Psoas muscle (tissue), 8 donors: ENCODE measurements at regions of chr15 and their contacts with region 1.

Region 1: GRCh38 chr15:70097337-70098169 is at the start of gene TLE3:
- DNase-seq: peak; percentile 98 to 99
- ATAC-seq: peak; percentile 57 to 68 (median 62)
- H3K4me3 ChIP-seq: peak within 1 kb of the TSS; percentile 95
- H3K27ac ChIP-seq: peak within 1 kb of the TSS; percentile 97
- H3K4me1 ChIP-seq: peaks cover 60% of the 10 kb centered on the region
- H3K27me3 ChIP-seq: no peaks in the 10 kb centered on the region
- CTCF ChIP-seq: peak; percentile 42
- total RNA-seq, gene TLE3: 10.8 to 59.9 (median 18.6) TPM

Region 2: GRCh38 chr15:69794645-69795461 is 302.7 kb before region 1 on chr15:
- intact Hi-C with region 1: loop called in 1 of 2 experiments (anchors 10 kb)
- DNase-seq: peak in 1 of 2 donors; percentile 45
- ATAC-seq: no peak
- H3K4me3 ChIP-seq: no peak overlapping the region
- H3K27ac ChIP-seq: peak overlapping the region; percentile 71
- H3K4me1 ChIP-seq: peaks cover 29% of the 10 kb centered on the region
- H3K27me3 ChIP-seq: peaks cover 0 to 2% (median 0%) of the 10 kb centered on the region in 3 donors
- CTCF ChIP-seq: no peak

Region 3: DNA sequence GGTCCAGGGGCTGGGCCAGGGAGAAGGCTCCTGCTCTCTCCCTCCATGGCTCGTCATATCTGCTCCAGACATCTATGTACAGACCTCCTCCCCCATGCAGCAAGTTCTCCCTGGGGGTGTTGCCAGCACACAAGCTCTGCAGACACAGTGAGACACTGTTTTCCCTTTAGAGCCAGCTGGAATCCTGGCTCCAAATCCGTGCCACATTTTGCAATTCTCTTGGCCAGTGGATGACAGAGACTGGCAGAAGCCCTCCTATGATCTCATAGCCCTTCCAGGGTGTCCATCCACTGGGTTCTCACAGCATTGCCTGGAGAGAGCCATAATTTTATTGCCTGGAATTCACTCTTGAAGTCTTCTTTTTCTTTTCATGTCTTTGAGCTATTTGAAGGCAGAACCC is 203.7 kb before region 1 on chr15:
- intact Hi-C with region 1: loop called in 1 of 2 experiments (anchors 5 kb)
- DNase-seq: peak; percentile 67 to 80
- ATAC-seq: peak; percentile 89 to 98 (median 93)
- H3K4me3 ChIP-seq: no peak overlapping the region
- H3K27ac ChIP-seq: no peak overlapping the region
- H3K4me1 ChIP-seq: peaks cover 5% of the 10 kb centered on the region
- H3K27me3 ChIP-seq: peaks cover 0 to 8% (median 2%) of the 10 kb centered on the region in 3 donors
- CTCF ChIP-seq: no peak

Region 4: DNA sequence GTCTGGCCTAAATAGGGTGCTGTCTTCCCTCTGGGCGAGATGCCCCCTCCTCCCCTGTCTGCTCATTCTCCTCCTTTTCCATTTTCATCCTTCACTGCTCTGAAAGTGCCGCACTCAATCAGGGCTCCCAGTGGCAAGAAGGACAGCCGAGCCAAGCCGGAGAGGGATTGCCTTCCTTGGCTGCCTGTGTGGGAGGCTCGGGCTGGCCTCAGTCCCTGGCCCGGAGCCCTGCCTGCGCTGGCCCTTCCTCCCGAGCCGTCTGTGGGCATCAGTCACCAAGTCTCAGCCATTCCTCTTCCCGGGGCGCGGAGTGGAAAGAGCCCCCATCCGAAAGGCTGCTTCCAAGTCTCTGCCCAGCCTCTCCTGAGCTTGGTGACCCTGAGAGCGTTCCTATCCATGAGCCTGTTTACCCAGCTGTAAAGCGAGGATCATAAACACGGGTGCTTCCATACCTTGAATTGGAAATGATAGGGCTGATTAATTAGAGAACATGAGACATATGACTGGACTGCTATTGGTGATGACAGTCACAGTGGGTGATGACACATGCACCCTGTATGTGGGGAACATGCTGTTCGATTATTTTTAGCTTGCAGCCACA is 59.2 kb after region 1 on chr15:
- intact Hi-C with region 1: loop called (anchors 1 to 5 kb)
- DNase-seq: peak; percentile 79 to 89
- ATAC-seq: peak; percentile 82 to 88 (median 86)
- H3K4me3 ChIP-seq: peak overlapping the region; percentile 37
- H3K27ac ChIP-seq: peak overlapping the region; percentile 87
- H3K4me1 ChIP-seq: peaks cover 47% of the 10 kb centered on the region
- H3K27me3 ChIP-seq: no peaks in the 10 kb centered on the region
- CTCF ChIP-seq: no peak

Region 5: GRCh38 chr15:70362886-70363285 is 265.3 kb after region 1 on chr15:
- intact Hi-C with region 1: loop called in 1 of 2 experiments (anchors 10 kb)
- DNase-seq: peak in 1 of 2 donors; percentile 29
- ATAC-seq: peak; percentile 51 to 82 (median 69)
- H3K4me3 ChIP-seq: no peak overlapping the region
- H3K27ac ChIP-seq: no peak overlapping the region
- H3K4me1 ChIP-seq: no peaks in the 10 kb centered on the region
- H3K27me3 ChIP-seq: peaks cover 0 to 4% (median 2%) of the 10 kb centered on the region in 3 donors
- CTCF ChIP-seq: peak; percentile 60